IMR-90 (cell line): ENCODE measurements at regions of chr11 and their contacts with region 1.

Region 1: DNA sequence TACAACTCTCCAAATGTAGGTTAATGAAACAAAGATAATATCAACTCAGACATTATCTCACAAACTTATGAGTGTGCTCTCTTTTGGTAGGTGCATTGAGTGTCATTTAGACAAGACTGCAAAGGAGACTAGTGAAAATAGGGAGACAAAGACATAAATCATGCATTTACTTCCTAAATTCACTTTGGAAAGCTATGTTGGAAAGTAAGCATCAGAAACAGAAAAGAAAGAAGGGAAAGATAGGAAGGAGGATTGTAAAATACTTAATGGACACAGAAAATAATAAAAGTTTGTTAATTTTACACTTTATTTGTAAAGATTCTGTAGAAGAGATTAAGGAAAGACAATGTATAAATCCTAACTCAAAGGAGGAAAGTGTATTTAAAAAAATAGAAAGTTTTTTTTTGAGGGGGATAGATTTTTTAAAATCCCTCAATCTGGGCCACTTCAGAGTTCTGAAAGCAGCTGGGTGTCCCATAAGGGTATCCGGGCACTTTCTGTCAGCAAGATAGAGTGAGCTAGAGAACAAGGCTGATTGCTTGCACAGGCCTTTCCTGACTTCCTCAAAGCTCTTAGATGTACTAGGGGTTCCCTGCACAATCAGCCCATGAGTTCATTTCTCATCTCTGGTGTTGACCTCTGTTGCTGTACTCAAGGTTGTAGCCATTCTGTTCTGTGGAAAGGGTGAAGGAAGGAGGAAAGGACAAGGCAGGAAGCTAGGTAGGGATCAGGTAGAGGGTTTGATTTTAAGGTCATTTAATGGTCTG is 22.4 kb upstream of the RDX start:
- DNase-seq: no peak
- ATAC-seq: no peak
- H3K4me3 ChIP-seq: no peak overlapping the region
- H3K27ac ChIP-seq: no peak overlapping the region
- H3K4me1 ChIP-seq: peaks cover 2% of the 10 kb centered on the region; the same call in 1 of the 2 replicates
- H3K27me3 ChIP-seq: no peaks in the 10 kb centered on the region
- CTCF ChIP-seq: no peak
- POLR2A ChIP-seq: no peak
- RAD21 ChIP-seq: no peak

Region 2: DNA sequence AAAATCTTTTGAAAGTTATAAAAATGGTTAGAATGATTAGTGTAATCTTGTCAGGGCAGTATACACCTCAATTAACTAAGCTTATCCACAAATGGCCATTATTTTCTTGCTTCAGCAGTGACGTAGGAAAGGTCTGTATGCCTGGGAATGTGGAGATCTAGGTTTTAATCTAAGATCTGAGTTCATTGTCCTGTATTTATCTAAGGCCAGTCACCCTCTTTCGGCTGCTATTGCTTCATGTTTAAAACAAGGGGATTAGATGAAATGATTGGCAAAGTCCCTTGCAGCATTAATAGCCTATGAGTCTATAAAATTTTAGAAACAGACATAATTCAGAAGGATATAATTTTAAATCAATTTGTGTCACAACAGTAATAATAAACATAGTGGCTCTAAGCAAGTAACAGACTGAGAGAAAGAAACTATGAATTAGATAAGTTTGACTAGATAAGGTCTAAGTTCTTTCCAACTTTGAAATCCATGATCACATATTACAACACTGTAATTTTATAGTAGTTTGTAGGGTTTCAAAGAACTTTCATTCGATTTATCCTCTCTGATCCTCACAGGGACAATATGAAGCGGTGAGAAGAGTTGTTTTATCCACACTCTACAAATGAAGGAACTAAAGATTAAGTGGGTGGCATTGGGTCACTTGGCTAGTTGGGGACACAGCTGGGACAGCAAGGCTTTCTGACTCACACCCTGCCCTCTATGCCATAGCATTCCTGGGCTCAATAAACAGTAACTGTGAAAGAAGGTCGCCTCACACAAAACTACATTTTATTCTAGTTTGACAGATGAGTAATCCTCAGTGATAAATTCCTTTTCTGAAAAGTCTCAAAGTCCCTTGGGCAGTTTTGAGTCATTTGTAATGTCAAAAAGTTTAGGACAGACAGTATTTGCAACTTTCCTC is 38.2 kb after region 1 on chr11:
- CTCF ChIA-PET with region 1: no interaction called
- POLR2A ChIA-PET with region 1: no interaction called
- dilution Hi-C with region 1: no loop called
- in situ Hi-C with region 1: no loop called
- intact Hi-C with region 1: loop called (anchors 2 kb)
- DNase-seq: peak; percentile 29
- ATAC-seq: peak; percentile 32; the same call in 1 of the 2 replicates
- H3K4me3 ChIP-seq: no peak overlapping the region
- H3K27ac ChIP-seq: no peak overlapping the region
- H3K4me1 ChIP-seq: peaks cover 4% of the 10 kb centered on the region; the same call in 1 of the 2 replicates
- H3K27me3 ChIP-seq: no peaks in the 10 kb centered on the region
- CTCF ChIP-seq: no peak
- POLR2A ChIP-seq: no peak
- RAD21 ChIP-seq: no peak